ENCODE measurements at regions of chr6 and their contacts with region 1.

Region 1: DNA sequence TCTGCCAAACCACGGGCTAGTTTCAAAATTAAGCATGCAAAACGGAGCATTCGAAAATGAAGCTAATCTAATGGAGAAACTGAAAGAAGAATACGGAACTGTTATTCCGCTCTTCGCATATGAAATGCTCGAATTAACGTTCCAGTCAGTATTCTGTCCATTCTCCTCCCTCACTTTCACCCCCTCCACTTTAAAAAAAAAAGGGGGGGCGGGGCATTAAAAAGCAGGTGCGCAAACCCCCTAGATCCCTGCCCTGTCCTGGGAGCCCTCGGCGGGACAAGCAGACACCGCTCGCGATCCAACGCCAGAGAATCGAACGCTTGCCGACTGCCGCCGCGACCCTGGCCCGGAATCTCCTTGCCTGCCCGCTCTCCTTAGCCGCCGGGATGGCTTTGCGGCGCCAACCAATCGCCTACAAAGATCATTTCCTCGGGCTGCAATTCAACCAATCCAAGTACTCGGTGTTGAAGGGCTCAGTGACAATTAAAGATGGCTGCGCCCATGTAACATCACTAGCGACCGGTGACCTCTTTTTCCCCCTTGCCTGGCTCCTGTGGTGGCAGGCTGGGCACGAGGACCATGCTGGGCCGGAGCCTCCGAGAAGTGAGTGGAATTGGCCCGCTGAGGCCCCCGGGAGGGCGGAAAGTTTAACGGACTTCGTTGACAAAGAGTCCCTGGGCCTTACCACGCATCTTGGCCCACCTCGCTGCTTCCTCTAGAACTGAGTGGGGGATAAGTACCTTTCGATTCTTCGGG is at the starts of genes QRSL1 and RTN4IP1:
- DNase-seq: peak; percentile 67 to 94 (median 90)
- ATAC-seq: peak; percentile 98
- H3K4me3 ChIP-seq: peak within 1 kb of the TSS; percentile 87
- H3K4me3 Mint-ChIP-seq: peak within 1 kb of the TSS; percentile 93 to 100 (median 98)
- H3K27ac ChIP-seq: peak within 1 kb of the TSS; percentile 94
- H3K27ac Mint-ChIP-seq: peak within 1 kb of the TSS; percentile 96 to 99 (median 98)
- H3K4me1 ChIP-seq: peaks cover 7 to 13% of the 10 kb centered on the region in 2 donors
- H3K4me1 Mint-ChIP-seq: peaks cover 13 to 67% (median 38%) of the 10 kb centered on the region in 7 donors
- H3K27me3 ChIP-seq: no peaks in the 10 kb centered on the region
- H3K27me3 Mint-ChIP-seq: no peaks in the 10 kb centered on the region
- total RNA-seq, gene QRSL1: 8.0 to 14.8 (median 13.6) TPM
- total RNA-seq, gene RTN4IP1: 5.1 to 6.4 (median 5.6) TPM

Region 2: DNA sequence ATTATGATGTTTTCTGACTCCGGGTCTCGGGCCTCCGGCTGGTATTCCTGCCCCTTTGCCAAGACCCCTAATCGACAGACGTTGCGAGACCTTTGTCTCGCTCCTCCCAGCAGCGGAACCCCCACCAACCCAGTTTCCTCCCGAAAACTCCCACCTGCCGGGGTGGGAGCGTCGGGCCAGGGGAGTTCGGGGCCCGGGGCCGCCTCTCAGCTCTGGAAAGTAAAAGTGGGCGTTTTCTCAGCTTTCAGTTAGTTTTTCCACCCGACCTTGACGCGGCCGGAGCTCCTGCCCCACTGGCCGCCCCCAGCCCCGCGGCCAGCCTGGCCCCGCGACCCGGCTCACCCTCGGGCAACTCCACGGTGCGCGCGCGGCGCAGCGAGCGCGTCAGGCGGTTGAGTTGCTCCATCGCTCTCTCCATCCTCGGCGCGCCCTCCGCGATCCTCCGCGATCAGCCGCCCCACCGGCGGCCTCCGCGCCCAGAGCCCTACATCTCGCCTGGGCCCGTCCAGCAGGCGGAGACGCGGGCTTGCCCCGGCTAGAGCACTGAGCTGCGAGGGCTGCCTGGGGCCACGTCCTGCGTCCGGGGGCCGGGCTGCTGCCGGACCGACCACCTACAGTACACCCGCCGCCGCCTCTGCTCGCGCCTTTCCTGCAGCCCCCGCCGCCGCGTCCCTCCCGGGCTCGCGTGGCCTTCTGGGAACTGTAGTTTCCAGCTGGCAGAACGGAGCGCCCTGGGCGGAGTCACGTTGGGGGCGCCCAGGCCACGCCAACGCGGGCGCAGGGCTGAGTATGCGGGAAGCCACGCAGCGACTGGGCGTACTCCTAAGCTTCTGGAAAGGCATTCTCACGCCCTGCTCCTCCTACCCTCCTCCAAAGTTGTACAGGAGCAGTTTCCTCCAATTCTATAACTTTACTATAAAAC is 1769.8 kb before region 1 on chr6 and contains the start of gene HACE1:
- CTCF ChIA-PET with region 1: no interaction called
- POLR2A ChIA-PET with region 1: no interaction called
- intact Hi-C with region 1: loop called in 1 of 2 experiments (anchors 5 kb)
- DNase-seq: peak; percentile 75 to 91 (median 89)
- ATAC-seq: peak; percentile 98
- H3K4me3 ChIP-seq: peak within 1 kb of the TSS; percentile 79
- H3K4me3 Mint-ChIP-seq: peak within 1 kb of the TSS; percentile 87 to 95 (median 92)
- H3K27ac ChIP-seq: peak within 1 kb of the TSS; percentile 69
- H3K27ac Mint-ChIP-seq: peak within 1 kb of the TSS; percentile 18 to 92 (median 86)
- H3K4me1 ChIP-seq: peaks cover 8 to 9% of the 10 kb centered on the region in 2 donors
- H3K4me1 Mint-ChIP-seq: peaks cover 10 to 30% (median 18%) of the 10 kb centered on the region in 7 donors
- H3K27me3 ChIP-seq: no peaks in the 10 kb centered on the region
- H3K27me3 Mint-ChIP-seq: peaks cover 3 to 20% (median 13%) of the 10 kb centered on the region in 5 donors
- total RNA-seq, gene HACE1: 11.4 to 17.1 (median 16.1) TPM

Region 3: GRCh38 chr6:105484238-105485161 is 1144.8 kb before region 1 on chr6:
- CTCF ChIA-PET with region 1: no interaction called
- POLR2A ChIA-PET with region 1: no interaction called
- intact Hi-C with region 1: loop called in 1 of 2 experiments (anchors 10 kb)
- DNase-seq: peak in 5 of 9 donors; percentile 7 to 36 (median 20)
- ATAC-seq: peak; percentile 59
- H3K4me3 ChIP-seq: no peak overlapping the region
- H3K4me3 Mint-ChIP-seq: no peak overlapping the region
- H3K27ac ChIP-seq: no peak overlapping the region
- H3K27ac Mint-ChIP-seq: peak overlapping the region in 2 of 9 donors; percentile 20 to 52
- H3K4me1 ChIP-seq: peaks cover 0 to 35% of the 10 kb centered on the region in 2 donors
- H3K4me1 Mint-ChIP-seq: peaks cover 0 to 63% (median 0%) of the 10 kb centered on the region in 7 donors
- H3K27me3 ChIP-seq: no peaks in the 10 kb centered on the region
- H3K27me3 Mint-ChIP-seq: peaks cover 11 to 16% (median 13%) of the 10 kb centered on the region in 5 donors

Region 4: GRCh38 chr6:106339334-106340029 is 289.8 kb before region 1 on chr6:
- CTCF ChIA-PET with region 1: no interaction called
- POLR2A ChIA-PET with region 1: no interaction called
- intact Hi-C with region 1: loop called in 1 of 2 experiments (anchors 2 kb)
- DNase-seq: peak in 8 of 9 donors; percentile 19 to 50 (median 35)
- ATAC-seq: peak; percentile 88
- H3K4me3 ChIP-seq: no peak overlapping the region
- H3K4me3 Mint-ChIP-seq: peak overlapping the region in 7 of 10 donors; percentile 15 to 67 (median 44)
- H3K27ac ChIP-seq: no peak overlapping the region
- H3K27ac Mint-ChIP-seq: no peak overlapping the region
- H3K4me1 ChIP-seq: no peaks in the 10 kb centered on the region
- H3K4me1 Mint-ChIP-seq: peaks cover 0 to 9% (median 6%) of the 10 kb centered on the region in 7 donors
- H3K27me3 ChIP-seq: no peaks in the 10 kb centered on the region
- H3K27me3 Mint-ChIP-seq: peaks cover 14 to 44% (median 20%) of the 10 kb centered on the region in 5 donors

Region 5: DNA sequence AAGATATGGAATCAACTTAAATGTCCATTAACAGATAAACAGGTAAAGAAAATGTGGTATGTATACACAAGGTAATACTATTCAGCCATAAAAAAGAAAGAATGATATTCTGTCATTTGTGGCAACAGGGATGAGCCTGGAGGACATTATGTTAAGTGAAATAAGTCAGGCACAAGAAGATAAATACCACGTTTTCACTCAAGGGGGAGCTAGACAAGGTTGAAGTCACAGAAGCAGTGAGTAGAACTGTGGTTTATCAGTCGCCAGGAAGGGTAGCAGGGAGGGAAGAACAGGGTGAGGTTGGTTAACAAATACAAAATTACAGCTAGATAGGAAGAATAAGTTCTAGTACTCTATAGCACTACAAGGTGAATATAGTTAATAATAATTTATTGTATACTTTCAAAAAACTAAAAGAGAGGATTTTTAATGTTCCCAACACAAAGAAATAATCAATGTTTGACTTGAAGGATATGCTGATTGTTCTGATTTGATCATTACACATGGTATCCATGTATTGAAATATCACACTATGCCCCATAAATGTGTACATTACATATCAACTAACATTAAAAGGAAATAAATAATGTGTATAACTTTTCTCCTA is 21.1 kb before region 1 on chr6:
- CTCF ChIA-PET with region 1: no interaction called
- POLR2A ChIA-PET with region 1: no interaction called
- intact Hi-C with region 1: loop called in 1 of 2 experiments (anchors 1 kb)
- DNase-seq: peak in 6 of 9 donors; percentile 15 to 48 (median 42)
- ATAC-seq: peak; percentile 83
- H3K4me3 ChIP-seq: no peak overlapping the region
- H3K4me3 Mint-ChIP-seq: no peak overlapping the region
- H3K27ac ChIP-seq: no peak overlapping the region
- H3K27ac Mint-ChIP-seq: no peak overlapping the region
- H3K4me1 ChIP-seq: no peaks in the 10 kb centered on the region
- H3K4me1 Mint-ChIP-seq: peaks cover 0 to 12% (median 4%) of the 10 kb centered on the region in 7 donors
- H3K27me3 ChIP-seq: no peaks in the 10 kb centered on the region
- H3K27me3 Mint-ChIP-seq: no peaks in the 10 kb centered on the region

Region 6: GRCh38 chr6:107033126-107033525 is 403.8 kb after region 1 on chr6:
- CTCF ChIA-PET with region 1: no interaction called
- POLR2A ChIA-PET with region 1: no interaction called
- intact Hi-C with region 1: loop called (anchors 1 to 2 kb)
- DNase-seq: no peak
- ATAC-seq: no peak
- H3K4me3 ChIP-seq: no peak overlapping the region
- H3K4me3 Mint-ChIP-seq: no peak overlapping the region
- H3K27ac ChIP-seq: no peak overlapping the region
- H3K27ac Mint-ChIP-seq: peak overlapping the region in 1 of 9 donors; percentile 24
- H3K4me1 ChIP-seq: peaks cover 3 to 17% of the 10 kb centered on the region in 2 donors
- H3K4me1 Mint-ChIP-seq: peaks cover 22 to 56% (median 46%) of the 10 kb centered on the region in 7 donors
- H3K27me3 ChIP-seq: no peaks in the 10 kb centered on the region
- H3K27me3 Mint-ChIP-seq: no peaks in the 10 kb centered on the region

Region 7: GRCh38 chr6:107459283-107460082 is 830.2 kb after region 1 on chr6 and contains the start of gene PDSS2:
- CTCF ChIA-PET with region 1: no interaction called
- POLR2A ChIA-PET with region 1: no interaction called
- intact Hi-C with region 1: loop called in 1 of 2 experiments (anchors 2 kb)
- DNase-seq: peak; percentile 83 to 98 (median 95)
- ATAC-seq: peak; percentile 100
- H3K4me3 ChIP-seq: peak within 1 kb of the TSS; percentile 95
- H3K4me3 Mint-ChIP-seq: peak within 1 kb of the TSS; percentile 87 to 99 (median 96)
- H3K27ac ChIP-seq: peak within 1 kb of the TSS; percentile 75
- H3K27ac Mint-ChIP-seq: peak within 1 kb of the TSS; percentile 92 to 99 (median 96)
- H3K4me1 ChIP-seq: peaks cover 5% of the 10 kb centered on the region in 2 donors
- H3K4me1 Mint-ChIP-seq: peaks cover 10 to 41% (median 36%) of the 10 kb centered on the region in 7 donors
- H3K27me3 ChIP-seq: no peaks in the 10 kb centered on the region
- H3K27me3 Mint-ChIP-seq: peaks cover 0 to 7% (median 0%) of the 10 kb centered on the region in 5 donors
- total RNA-seq, gene PDSS2: 12.0 to 15.3 (median 12.1) TPM